ENCODE measurements at regions of chr1 and their contacts with region 1.

Region 1: GRCh38 chr1:64809309-64809708 is 64.4 kb downstream of the RAVER2 start:
- DNase-seq: no peak
- H3K4me3 ChIP-seq: no peak overlapping the region
- H3K27ac ChIP-seq: no peak overlapping the region
- H3K4me1 ChIP-seq: peaks cover 16% of the 10 kb centered on the region
- H3K27me3 ChIP-seq: no peaks in the 10 kb centered on the region
- CTCF ChIP-seq: no peak

Region 2: DNA sequence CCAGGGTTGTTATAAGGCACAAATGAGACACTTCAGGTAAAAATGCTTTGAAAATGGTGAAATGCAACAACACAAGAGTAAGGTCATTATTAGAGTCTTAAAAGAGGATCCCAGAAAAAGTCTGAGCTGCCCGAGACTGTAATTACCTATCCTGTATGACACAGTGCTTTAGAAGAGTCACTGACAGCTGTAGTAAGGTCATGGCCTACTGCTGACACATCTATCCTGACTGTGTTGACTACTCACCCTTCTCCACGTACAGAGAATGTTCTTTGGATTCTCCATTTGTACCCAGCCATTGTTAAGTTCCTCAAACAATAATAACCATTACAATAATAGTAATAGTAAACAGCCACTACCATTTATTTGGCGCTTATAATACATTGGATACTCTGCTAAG is 235.0 kb before region 1 on chr1:
- CTCF ChIA-PET with region 1: no interaction called
- POLR2A ChIA-PET with region 1: no interaction called
- intact Hi-C with region 1: no loop called
- DNase-seq: no peak
- H3K4me3 ChIP-seq: no peak overlapping the region
- H3K27ac ChIP-seq: no peak overlapping the region
- H3K4me1 ChIP-seq: peaks cover 25% of the 10 kb centered on the region
- H3K27me3 ChIP-seq: no peaks in the 10 kb centered on the region
- CTCF ChIP-seq: no peak

Region 3: DNA sequence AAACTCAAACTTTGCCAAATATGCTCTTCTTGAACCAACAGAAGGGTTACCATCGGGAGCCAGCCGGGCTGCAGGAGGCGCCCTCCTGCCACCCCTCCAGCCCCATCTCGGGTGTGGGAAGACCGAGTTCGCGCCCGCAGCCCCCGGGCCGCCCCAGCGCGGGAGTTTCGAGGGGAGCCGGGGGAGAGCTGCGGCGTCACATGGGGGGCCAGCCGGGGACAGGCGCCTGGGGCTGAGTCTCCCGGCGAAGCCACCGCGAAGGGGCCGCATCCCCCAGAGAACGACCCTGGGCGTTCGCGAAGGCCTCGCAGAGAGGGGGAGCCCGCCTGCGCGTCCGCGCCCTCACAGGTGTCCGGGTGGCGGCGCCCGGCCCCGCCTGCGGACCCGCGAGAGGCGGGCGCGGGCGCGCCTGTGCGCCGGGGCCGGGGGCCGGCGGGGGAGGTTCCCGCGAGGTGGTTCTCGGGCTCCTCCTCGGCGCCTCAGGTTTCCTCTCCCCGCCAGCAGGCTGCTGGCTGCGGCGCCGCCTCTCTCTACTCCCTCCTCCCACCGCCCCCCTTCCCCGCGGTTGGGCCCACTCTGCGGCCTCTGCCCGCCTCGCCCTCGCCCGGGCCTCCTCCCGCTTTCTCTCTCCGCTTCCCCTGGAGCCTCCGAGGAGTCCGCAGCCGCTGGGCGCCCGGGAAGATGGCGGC is 64.7 kb before region 1 on chr1 and contains the start of gene RAVER2:
- CTCF ChIA-PET with region 1: no interaction called
- POLR2A ChIA-PET with region 1: no interaction called
- intact Hi-C with region 1: loop called (anchors 5 kb)
- DNase-seq: peak; percentile 91
- H3K4me3 ChIP-seq: peak within 1 kb of the TSS; percentile 98
- H3K27ac ChIP-seq: peak within 1 kb of the TSS; percentile 93
- H3K4me1 ChIP-seq: peaks cover 28% of the 10 kb centered on the region
- H3K27me3 ChIP-seq: no peaks in the 10 kb centered on the region
- CTCF ChIP-seq: peak; percentile 72
- total RNA-seq, gene RAVER2: 34.1 and 36.5 TPM in 2 replicates

Measured in A673 (cell line).